ENCODE measurements at regions of chr4 and their contacts with region 1.

Region 1: GRCh38 chr4:57037982-57038604 is 59.4 kb downstream of the POLR2B start:
- DNase-seq: peak in 1 of 2 experiments; percentile 53
- H3K4me3 ChIP-seq: no peak overlapping the region
- H3K27ac ChIP-seq: no peak overlapping the region
- H3K4me1 ChIP-seq: no peaks in the 10 kb centered on the region
- H3K27me3 ChIP-seq: no peaks in the 10 kb centered on the region
- CTCF ChIP-seq: peak; percentile 77

Region 2: GRCh38 chr4:57080781-57081650 is 42.9 kb after region 1 on chr4:
- CTCF ChIA-PET with region 1: interaction called, 12 read pairs
- POLR2A ChIA-PET with region 1: no interaction called
- intact Hi-C with region 1: no loop called
- DNase-seq: peak in 1 of 2 experiments; percentile 47
- H3K4me3 ChIP-seq: no peak overlapping the region
- H3K27ac ChIP-seq: peak overlapping the region; percentile 39
- H3K4me1 ChIP-seq: peaks cover 11% of the 10 kb centered on the region; the same call in 1 of the 2 replicates
- H3K27me3 ChIP-seq: no peaks in the 10 kb centered on the region
- CTCF ChIP-seq: no peak

Region 3: DNA sequence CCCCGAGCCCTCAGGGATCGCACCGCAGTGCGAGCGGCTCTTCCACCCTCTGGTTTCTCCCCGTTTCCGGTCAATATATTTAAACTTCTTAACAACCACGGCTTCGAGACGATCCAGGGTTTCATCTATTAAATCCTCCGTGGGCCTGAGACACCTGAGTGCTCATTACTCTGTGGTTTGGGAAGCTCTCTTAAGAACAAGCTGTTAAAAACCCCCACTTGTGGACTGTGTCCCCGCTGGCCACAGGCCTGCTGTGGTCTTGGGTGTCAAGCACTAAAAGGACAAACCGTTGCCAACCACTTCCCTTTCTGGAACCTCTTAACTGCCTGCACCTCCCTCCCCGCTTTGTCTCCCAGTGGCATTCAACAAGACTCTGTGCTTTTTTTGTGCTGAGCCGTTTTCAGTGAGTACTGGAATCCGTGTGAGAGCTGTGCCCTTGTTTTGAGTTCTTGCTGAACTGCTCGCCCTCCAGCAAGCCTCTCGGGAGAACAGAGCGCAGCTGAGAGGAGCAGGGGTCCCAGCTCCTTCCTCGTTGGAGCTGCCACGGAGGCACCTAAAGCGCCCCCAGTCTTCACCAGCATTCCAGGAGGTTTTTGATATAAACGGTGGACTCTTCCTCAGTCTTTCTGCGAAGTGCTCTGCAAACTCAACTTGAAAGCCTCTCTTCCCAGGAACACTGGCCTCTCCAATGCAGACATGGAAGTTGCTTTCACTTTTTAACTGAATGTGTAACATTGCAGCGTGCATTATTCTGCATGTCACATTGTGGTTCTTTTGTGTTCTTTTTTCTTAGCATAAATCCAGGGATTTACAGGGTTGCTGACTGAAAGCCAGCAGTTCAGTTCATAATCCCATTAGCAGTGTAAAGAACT is 72.8 kb after region 1 on chr4:
- CTCF ChIA-PET with region 1: interaction called, 3 read pairs
- POLR2A ChIA-PET with region 1: no interaction called
- intact Hi-C with region 1: loop called (anchors 10 kb)
- DNase-seq: peak in 1 of 2 experiments; percentile 14
- H3K4me3 ChIP-seq: no peak overlapping the region
- H3K27ac ChIP-seq: no peak overlapping the region
- H3K4me1 ChIP-seq: no peaks in the 10 kb centered on the region
- H3K27me3 ChIP-seq: no peaks in the 10 kb centered on the region
- CTCF ChIP-seq: no peak

Region 4: DNA sequence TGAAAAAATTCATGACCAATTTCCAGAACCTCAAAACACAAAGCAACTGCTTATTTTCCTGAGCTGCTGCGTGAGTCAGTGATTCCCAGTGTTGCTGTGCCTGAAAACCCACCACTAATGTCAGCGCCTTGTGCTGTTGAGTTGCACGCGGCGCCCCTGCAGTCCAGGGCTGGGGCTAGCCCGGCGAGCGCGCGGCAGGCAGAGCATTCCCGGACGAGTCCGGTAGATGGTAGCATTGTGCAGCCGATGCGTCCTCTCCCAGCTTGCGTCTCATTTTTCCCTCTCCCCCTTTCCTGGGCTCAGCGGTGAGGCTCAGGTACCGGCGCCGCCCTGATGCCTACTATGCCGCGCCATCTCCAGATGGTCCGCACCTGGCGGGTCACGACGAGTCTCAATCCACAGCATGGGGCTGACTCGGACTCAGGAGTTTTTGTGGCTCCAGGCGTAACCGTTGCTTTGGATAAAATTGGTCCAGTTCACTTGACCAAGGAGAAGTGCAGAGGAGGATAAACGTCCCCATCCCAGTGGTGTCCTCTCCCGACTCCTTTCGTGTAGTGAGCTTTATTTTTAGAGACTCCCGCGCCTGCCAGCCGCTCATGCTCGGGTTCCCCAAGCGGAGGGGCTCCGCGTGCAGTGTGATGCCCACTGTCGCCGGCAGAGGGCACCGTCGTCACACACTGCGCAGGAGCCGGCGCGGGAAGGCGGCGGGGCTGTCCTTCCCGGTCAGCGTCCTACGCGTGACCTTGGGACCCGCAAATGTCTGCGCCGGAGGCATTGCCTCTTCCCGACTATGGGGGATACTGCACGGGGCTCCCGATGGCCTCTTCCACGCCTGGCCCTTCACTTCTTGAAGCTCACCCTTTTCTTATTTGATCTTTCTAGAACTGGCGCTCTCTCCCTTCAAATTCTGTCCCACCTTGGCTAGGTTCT is 125.7 kb after region 1 on chr4:
- CTCF ChIA-PET with region 1: interaction called, 19 read pairs
- POLR2A ChIA-PET with region 1: no interaction called
- intact Hi-C with region 1: loop called (anchors 1 kb)
- DNase-seq: peak; percentile 39 to 69
- H3K4me3 ChIP-seq: peak overlapping the region; percentile 66
- H3K27ac ChIP-seq: no peak overlapping the region
- H3K4me1 ChIP-seq: no peaks in the 10 kb centered on the region; the same call in 1 of the 2 replicates
- H3K27me3 ChIP-seq: no peaks in the 10 kb centered on the region
- CTCF ChIP-seq: peak; percentile 80

Region 5: GRCh38 chr4:57303012-57303751 is 265.1 kb after region 1 on chr4:
- CTCF ChIA-PET with region 1: no interaction called
- POLR2A ChIA-PET with region 1: no interaction called
- intact Hi-C with region 1: no loop called
- DNase-seq: peak in 1 of 2 experiments; percentile 51
- H3K4me3 ChIP-seq: no peak overlapping the region
- H3K27ac ChIP-seq: no peak overlapping the region
- H3K4me1 ChIP-seq: no peaks in the 10 kb centered on the region
- H3K27me3 ChIP-seq: no peaks in the 10 kb centered on the region
- CTCF ChIP-seq: no peak

Region 6: DNA sequence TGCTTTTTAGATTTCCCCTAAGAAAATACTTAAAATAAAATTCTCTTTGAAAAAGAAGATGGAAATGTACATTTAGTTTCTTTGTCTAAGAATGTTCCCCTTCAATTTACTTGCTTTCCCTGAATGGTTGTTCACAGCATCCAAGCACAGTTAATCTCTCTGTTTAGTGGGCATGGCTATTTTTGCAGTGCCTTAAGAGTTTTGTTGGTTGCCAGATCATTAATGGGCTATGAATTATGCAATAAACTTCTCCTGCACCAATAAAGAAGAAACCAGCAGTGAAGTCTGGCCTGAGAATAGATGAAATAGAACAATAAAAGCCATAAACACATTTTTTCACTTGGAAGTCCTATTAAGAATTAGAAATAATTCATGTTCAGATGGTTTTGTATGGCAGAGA is 1052.4 kb after region 1 on chr4:
- CTCF ChIA-PET with region 1: no interaction called
- POLR2A ChIA-PET with region 1: no interaction called
- intact Hi-C with region 1: no loop called
- DNase-seq: no peak
- H3K4me3 ChIP-seq: no peak overlapping the region
- H3K27ac ChIP-seq: no peak overlapping the region
- H3K4me1 ChIP-seq: no peaks in the 10 kb centered on the region
- H3K27me3 ChIP-seq: no peaks in the 10 kb centered on the region
- CTCF ChIP-seq: no peak

Measured in PC-9 (cell line).